Sigmoid colon (tissue), 7 donors: ENCODE measurements at regions of chr17 and their contacts with region 1.

Region 1: DNA sequence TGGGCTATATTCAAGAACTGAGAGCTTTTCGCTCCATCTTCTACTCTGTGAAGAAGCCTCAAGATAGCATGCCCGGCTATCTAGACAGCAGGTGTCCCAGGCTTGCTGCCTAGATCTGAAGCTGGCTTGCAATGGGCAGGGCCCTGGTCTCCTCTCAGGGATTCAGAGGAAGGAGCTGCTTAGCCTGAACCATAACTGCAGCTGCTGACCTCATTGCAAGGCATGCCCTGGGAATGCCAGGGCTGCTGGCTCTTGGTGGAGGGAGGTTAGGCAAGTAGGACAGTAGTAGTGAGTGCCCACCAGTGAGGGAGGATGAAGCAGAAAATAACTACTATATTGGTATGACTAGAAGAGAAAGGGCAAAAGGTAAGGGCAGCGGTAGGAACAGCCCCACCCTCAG is 21.3 kb upstream of the SLC35B1 start:
- DNase-seq: no peak
- H3K4me3 ChIP-seq: no peak overlapping the region
- H3K27ac ChIP-seq: peak overlapping the region; percentile 83 to 88 (median 84)
- H3K4me1 ChIP-seq: peaks cover 0 to 68% (median 56%) of the 10 kb centered on the region in 4 donors
- H3K27me3 ChIP-seq: no peaks in the 10 kb centered on the region
- CTCF ChIP-seq: no peak
- EP300 ChIP-seq: no peak
- POLR2A ChIP-seq: no peak

Region 2: GRCh38 chr17:49763735-49764558 is 34.9 kb after region 1 on chr17 and contains the start of gene FAM117A:
- intact Hi-C with region 1: loop called (anchors 5 kb)
- DNase-seq: peak; percentile 99
- H3K4me3 ChIP-seq: peak within 1 kb of the TSS; percentile 70 to 99 (median 98)
- H3K27ac ChIP-seq: peak within 1 kb of the TSS; percentile 85 to 94 (median 92)
- H3K4me1 ChIP-seq: peaks cover 0 to 51% (median 40%) of the 10 kb centered on the region in 4 donors
- H3K27me3 ChIP-seq: no peaks in the 10 kb centered on the region
- CTCF ChIP-seq: no peak
- EP300 ChIP-seq: no peak
- POLR2A ChIP-seq: peak; percentile 30 to 40
- total RNA-seq, gene FAM117A: 11.1 to 34.6 (median 27.4) TPM

Region 3: DNA sequence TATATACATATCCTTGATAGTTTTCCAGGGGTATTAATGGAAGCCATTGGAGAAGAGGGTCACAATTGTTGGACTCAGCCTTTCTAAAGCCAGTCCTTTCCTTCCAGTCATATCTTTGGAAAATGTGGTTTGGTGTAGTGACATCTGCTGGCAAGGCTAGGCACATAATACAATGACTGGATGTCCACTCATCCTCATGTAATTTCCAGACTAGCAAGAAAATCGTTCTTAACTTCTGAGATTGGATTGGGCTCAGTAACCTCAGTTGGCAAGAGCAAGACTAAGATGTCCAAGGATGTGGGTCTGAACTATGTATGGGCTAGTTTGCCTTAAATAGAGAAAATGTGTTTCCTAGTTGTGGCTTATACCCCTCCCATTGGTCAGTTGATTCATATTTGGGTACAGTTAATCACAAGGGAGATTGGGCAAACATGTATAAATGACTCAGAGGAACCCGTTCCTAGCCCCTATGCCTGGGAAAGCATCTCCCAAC is 50.7 kb after region 1 on chr17:
- intact Hi-C with region 1: loop called (anchors 5 kb)
- DNase-seq: no peak
- H3K4me3 ChIP-seq: no peak overlapping the region
- H3K27ac ChIP-seq: peak overlapping the region; percentile 25 to 87 (median 56)
- H3K4me1 ChIP-seq: peaks cover 0 to 73% (median 57%) of the 10 kb centered on the region in 4 donors
- H3K27me3 ChIP-seq: no peaks in the 10 kb centered on the region
- CTCF ChIP-seq: peak in 3 of 4 experiments; percentile 43 to 62 (median 54)
- EP300 ChIP-seq: no peak
- POLR2A ChIP-seq: no peak